Left ventricle myocardium inferior (tissue), 1 donor: ENCODE measurements at regions of chr10 and their contacts with region 1.

Region 1: DNA sequence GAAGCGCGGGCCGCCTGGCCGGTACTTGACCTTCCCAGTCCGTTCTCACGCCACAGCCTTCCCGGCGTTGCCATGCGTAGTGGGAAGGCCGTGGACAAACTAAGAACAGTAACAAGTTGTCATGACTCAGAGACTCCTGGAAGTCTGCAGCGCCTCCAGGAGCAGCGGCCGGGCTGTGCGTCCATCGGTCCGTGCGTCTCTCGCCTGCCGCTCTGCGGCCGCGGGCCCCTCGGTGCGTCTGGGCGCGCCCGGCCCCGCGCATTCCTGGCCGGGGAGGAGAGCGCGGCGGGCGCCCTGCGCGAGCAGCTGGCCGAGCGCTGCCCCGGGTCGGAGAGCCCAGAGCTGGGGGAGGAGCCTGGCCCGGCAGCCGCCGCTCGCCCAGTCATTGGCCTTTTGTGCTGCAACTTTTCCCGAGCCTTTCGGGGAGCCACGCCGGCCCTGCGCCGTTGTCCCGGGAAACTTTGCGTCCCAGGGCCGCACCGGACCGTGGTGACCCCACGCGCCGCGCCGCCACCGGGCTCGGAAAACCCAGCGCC is 123.7 kb downstream of the TACC2 start:
- DNase-seq: peak; percentile 86
- H3K4me3 ChIP-seq: peak overlapping the region; percentile 81
- H3K27ac ChIP-seq: peak overlapping the region; percentile 99
- H3K4me1 ChIP-seq: peaks cover 62% of the 10 kb centered on the region
- H3K27me3 ChIP-seq: no peaks in the 10 kb centered on the region
- CTCF ChIP-seq: peak; percentile 65

Region 2: GRCh38 chr10:122062831-122063674 is 49.6 kb before region 1 on chr10:
- intact Hi-C with region 1: loop called (anchors 2 kb)
- DNase-seq: peak; percentile 85
- H3K4me3 ChIP-seq: peak overlapping the region; percentile 3
- H3K27ac ChIP-seq: peak overlapping the region; percentile 92
- H3K4me1 ChIP-seq: peaks cover 37% of the 10 kb centered on the region
- H3K27me3 ChIP-seq: no peaks in the 10 kb centered on the region
- CTCF ChIP-seq: no peak